Activated CD4-positive, alpha-beta T cell treated with anti-CD3 and anti-CD28 coated beads, Interleukin-2, amount 10 ng/mL, durations not matched to agents 7 days and 5 days (primary cell): ENCODE measurements at regions of chr20 and their contacts with region 1.

Region 1: GRCh38 chr20:49179368-49180277 is 8.5 kb downstream of the STAU1 start:
- DNase-seq: no peak
- H3K4me3 Mint-ChIP-seq: no peak overlapping the region
- H3K27ac Mint-ChIP-seq: no peak overlapping the region
- H3K4me1 Mint-ChIP-seq: peaks cover 54% of the 10 kb centered on the region
- H3K27me3 Mint-ChIP-seq: no peaks in the 10 kb centered on the region

Region 2: GRCh38 chr20:48912065-48912762 is 267.4 kb before region 1 on chr20:
- CTCF ChIA-PET with region 1: no interaction called
- POLR2A ChIA-PET with region 1: no interaction called
- DNase-seq: no peak
- H3K4me3 Mint-ChIP-seq: no peak overlapping the region
- H3K27ac Mint-ChIP-seq: no peak overlapping the region
- H3K4me1 Mint-ChIP-seq: peaks cover 4% of the 10 kb centered on the region
- H3K27me3 Mint-ChIP-seq: peaks cover 12% of the 10 kb centered on the region

Region 3: DNA sequence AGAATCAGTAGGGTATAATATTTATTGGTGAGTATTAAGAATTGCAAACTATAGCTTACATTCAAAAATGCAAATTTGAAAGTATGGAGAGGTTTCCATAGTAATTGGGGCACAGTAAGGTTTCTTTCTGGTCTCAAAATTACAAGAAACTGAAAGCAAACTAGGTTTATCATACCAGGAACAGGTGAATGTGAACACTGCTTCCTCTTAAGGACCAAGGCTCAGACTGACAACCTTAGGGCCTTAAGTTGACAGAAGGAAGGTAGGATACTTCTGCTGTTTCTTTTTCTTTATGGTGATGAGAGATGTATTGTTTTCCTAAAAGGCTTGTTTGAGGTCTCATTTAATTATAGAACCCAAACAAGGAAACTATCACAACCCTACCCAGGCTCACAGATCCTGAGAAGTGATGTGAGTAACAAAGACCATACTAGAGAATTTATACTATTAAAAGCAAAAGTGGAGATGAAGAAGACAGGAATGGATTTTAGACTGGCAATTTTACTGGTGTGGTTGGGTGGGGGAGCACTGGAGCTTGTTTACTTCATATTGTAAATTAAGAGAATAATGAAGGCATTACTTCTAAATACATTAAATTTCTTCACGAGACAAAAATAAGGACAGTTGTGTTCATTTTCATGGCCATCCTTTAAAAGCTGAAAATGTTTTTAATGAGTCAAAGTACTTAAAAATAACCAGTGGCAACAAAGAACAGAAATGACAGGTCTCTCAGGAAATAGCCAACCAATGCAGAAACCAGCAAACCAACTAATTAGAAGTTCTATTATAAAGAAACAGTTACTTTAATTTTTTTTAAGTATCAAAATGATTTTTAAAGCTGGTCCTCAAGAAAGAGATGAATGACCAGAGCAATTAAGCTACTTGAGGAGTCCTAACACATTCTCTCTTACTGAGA is 12.8 kb before region 1 on chr20:
- CTCF ChIA-PET with region 1: interaction called, 35 read pairs
- POLR2A ChIA-PET with region 1: no interaction called
- DNase-seq: peak; percentile 33
- H3K4me3 Mint-ChIP-seq: peak overlapping the region; percentile 43
- H3K27ac Mint-ChIP-seq: peak overlapping the region; percentile 90
- H3K4me1 Mint-ChIP-seq: peaks cover 58% of the 10 kb centered on the region
- H3K27me3 Mint-ChIP-seq: no peaks in the 10 kb centered on the region

Region 4: DNA sequence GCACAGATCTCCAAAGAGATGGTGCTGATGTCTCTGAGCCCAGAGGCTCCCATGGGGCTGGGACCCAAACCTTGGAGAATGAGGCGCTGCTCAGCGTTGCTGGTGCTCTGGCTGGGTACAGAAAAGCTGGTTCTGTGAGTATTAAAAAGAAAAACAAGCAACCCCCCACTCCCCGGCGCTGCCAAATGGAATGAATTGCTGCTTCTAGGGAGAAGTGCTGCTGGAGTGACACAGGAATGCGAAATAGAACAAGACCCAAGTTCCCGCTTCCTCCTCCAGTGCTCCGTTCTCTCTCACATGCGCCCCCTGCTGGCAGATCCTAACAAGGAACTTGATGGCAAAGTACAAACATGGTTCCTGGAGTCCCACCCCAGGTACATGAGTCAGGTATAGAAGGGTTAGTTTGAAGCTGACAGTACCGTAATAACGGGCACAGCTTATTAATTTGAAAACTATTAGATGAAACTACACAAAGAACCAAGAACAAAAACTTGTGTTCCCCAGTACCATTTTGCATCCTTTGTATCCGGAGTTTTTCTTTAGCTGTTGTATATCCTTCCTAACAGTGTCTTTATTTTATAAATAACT is 37.5 kb after region 1 on chr20:
- CTCF ChIA-PET with region 1: interaction called, 12 read pairs
- POLR2A ChIA-PET with region 1: no interaction called
- DNase-seq: peak; percentile 95
- H3K4me3 Mint-ChIP-seq: no peak overlapping the region
- H3K27ac Mint-ChIP-seq: peak overlapping the region; percentile 21
- H3K4me1 Mint-ChIP-seq: peaks cover 20% of the 10 kb centered on the region
- H3K27me3 Mint-ChIP-seq: peaks cover 1% of the 10 kb centered on the region

Region 5: DNA sequence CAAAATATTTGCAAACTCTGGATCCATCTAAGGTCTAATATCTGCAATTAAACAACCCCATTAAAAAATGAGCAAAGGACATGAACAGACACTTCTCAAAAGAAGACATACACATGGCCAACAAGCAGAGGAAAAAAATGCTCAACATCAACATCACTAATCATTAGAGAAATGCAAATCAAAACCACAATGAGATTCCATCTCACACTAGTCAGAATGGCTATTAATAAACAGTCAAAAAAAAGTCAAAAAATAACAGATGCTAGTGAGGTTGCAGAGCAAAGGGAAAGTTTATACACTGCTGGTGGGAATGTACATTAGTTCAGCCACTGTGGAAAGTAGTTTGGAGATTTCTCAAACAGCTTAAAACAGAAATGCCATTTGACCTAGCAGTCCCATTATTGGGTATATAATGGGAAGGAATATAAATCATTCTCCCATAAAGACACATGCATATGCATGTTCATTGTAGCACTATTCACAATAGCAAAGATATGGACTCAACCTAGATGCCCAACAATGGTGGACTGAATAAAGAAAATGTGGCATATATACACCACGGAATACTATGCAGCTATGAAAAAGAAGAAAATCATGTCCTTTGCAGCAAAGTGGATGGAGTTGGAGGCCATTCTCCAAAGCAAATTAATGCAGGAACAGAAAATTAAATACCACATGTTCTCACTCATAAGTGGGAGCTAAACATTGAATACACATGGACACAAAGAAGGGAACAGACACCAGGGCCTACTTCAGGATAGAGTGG is 89.2 kb after region 1 on chr20:
- CTCF ChIA-PET with region 1: no interaction called
- POLR2A ChIA-PET with region 1: no interaction called
- DNase-seq: no peak
- H3K4me3 Mint-ChIP-seq: peak overlapping the region; percentile 79
- H3K27ac Mint-ChIP-seq: peak overlapping the region; percentile 78
- H3K4me1 Mint-ChIP-seq: peaks cover 73% of the 10 kb centered on the region
- H3K27me3 Mint-ChIP-seq: no peaks in the 10 kb centered on the region